Breast epithelium (tissue), 4 donors: ENCODE measurements at regions of chr12 and their contacts with region 1.

Region 1: GRCh38 chr12:53484686-53485567 is 14.3 kb downstream of the MAP3K12 start:
- DNase-seq: no peak
- H3K4me3 ChIP-seq: no peak overlapping the region
- H3K27ac ChIP-seq: no peak overlapping the region
- H3K4me1 ChIP-seq: no peaks in the 10 kb centered on the region
- H3K27me3 ChIP-seq: no peaks in the 10 kb centered on the region
- CTCF ChIP-seq: no peak
- POLR2A ChIP-seq: no peak

Region 2: DNA sequence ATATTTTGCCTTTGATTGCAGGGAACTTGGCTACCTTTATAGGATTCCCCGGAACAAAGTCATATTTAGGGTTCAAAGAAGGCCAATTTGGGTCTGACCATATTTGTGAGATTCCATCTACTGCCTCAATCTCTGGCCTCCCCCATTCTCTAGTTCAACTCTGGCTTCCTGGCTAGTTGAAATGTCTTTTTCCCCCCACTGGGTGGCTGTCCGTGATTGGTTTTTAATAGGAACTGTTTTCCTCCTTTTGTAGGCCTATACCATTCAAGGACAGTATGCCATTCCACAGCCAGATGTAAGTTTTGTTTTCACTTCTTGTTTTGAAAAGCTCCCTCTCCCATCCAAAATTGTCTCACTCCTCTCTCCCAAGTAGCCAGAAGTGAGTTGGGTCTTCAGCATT is 19.2 kb before region 1 on chr12:
- intact Hi-C with region 1: loop called (anchors 1 kb)
- DNase-seq: no peak
- H3K4me3 ChIP-seq: no peak overlapping the region
- H3K27ac ChIP-seq: peak overlapping the region; percentile 11 to 28
- H3K4me1 ChIP-seq: no peaks in the 10 kb centered on the region
- H3K27me3 ChIP-seq: no peaks in the 10 kb centered on the region
- CTCF ChIP-seq: no peak
- POLR2A ChIP-seq: no peak